ENCODE measurements at regions of chr1 and their contacts with region 1.

Region 1: GRCh38 chr1:28736450-28737306 is at the start of gene YTHDF2:
- DNase-seq: peak; percentile 97 to 99 (median 98)
- H3K4me3 ChIP-seq: peak within 1 kb of the TSS; percentile 98
- H3K27ac ChIP-seq: peak within 1 kb of the TSS; percentile 62 to 83
- H3K4me1 ChIP-seq: peaks cover 5% of the 10 kb centered on the region
- H3K27me3 ChIP-seq: no peaks in the 10 kb centered on the region
- CTCF ChIP-seq: peak; percentile 92 to 98 (median 95)
- EP300 ChIP-seq: no peak
- POLR2A ChIP-seq: peak; percentile 82
- total RNA-seq, gene YTHDF2: 25.8 to 70.2 (median 54.8) TPM

Region 2: GRCh38 chr1:28565040-28565439 is 171.6 kb before region 1 on chr1:
- intact Hi-C with region 1: no loop called
- DNase-seq: no peak
- H3K4me3 ChIP-seq: no peak overlapping the region
- H3K27ac ChIP-seq: no peak overlapping the region
- H3K4me1 ChIP-seq: no peaks in the 10 kb centered on the region
- H3K27me3 ChIP-seq: no peaks in the 10 kb centered on the region
- CTCF ChIP-seq: no peak
- EP300 ChIP-seq: no peak
- POLR2A ChIP-seq: no peak

Region 3: DNA sequence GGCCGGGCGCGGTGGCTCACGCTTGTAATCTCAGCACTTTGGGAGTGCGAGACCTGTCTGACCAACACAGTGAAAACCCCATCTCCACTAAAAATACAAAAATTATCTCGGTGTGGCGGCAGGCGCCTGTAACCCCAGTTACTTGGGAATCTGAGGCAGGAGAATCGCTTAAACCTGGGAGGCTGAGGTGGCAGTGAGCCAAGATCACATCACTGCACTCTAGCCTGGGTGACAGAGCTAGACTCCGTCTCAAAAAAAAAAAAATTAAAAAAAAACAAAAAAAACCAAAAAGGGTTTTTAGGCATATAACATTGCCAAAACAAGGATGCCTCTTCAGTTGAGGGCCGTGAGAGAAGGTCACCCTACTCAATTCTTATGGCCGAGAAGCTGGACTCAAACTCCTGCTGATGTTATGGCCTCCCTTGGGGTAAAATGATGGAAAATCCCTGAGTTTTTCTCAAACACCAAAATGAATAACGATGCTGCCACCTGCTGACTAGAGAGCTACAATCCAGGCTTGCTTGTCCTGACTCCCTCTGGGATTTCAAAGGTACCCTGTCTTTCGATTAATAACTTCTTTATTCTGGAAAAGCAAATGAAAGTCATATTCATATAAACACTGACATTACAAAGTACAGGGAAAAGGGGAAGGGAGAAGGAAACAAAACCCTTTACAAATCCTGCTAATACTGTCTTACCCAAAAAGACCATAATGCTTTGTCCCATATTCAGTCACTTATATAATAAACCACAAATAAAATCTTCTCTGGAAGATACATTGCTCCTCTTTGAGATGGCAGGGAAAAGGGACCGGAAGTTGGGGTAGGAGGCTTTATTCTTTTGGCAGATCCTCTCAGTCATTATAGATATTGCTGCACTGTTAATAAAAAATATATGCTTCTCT is 133.9 kb before region 1 on chr1:
- intact Hi-C with region 1: no loop called
- DNase-seq: peak; percentile 54 to 78 (median 62)
- H3K4me3 ChIP-seq: no peak overlapping the region
- H3K27ac ChIP-seq: peak overlapping the region in 1 of 2 donors; percentile 14
- H3K4me1 ChIP-seq: peaks cover 2% of the 10 kb centered on the region
- H3K27me3 ChIP-seq: no peaks in the 10 kb centered on the region
- CTCF ChIP-seq: peak; percentile 42 to 81 (median 74)
- EP300 ChIP-seq: no peak
- POLR2A ChIP-seq: no peak

Region 4: GRCh38 chr1:28642847-28643635 is 93.6 kb before region 1 on chr1 and contains the start of gene TAF12:
- intact Hi-C with region 1: loop called in 2 of 4 experiments (anchors 5 kb)
- DNase-seq: peak; percentile 89 to 95 (median 92)
- H3K4me3 ChIP-seq: peak within 1 kb of the TSS; percentile 53
- H3K27ac ChIP-seq: peak within 1 kb of the TSS; percentile 47 to 80
- H3K4me1 ChIP-seq: peaks cover 5% of the 10 kb centered on the region
- H3K27me3 ChIP-seq: no peaks in the 10 kb centered on the region
- CTCF ChIP-seq: peak in 2 of 3 donors; percentile 60 to 67
- EP300 ChIP-seq: no peak
- POLR2A ChIP-seq: no peak
- total RNA-seq, gene TAF12: 15.4 to 26.4 (median 18.4) TPM

Region 5: GRCh38 chr1:28656335-28656734 is 80.3 kb before region 1 on chr1:
- intact Hi-C with region 1: loop called in 1 of 4 experiments (anchors 10 kb)
- DNase-seq: no peak
- H3K4me3 ChIP-seq: no peak overlapping the region
- H3K27ac ChIP-seq: no peak overlapping the region
- H3K4me1 ChIP-seq: no peaks in the 10 kb centered on the region
- H3K27me3 ChIP-seq: no peaks in the 10 kb centered on the region
- CTCF ChIP-seq: no peak
- EP300 ChIP-seq: no peak
- POLR2A ChIP-seq: no peak